ENCODE measurements at regions of chr9 and their contacts with region 1.

Region 1: GRCh38 chr9:68999393-69000105 is 14.4 kb downstream of the PRKACG start:
- DNase-seq: peak; percentile 73
- H3K4me3 Mint-ChIP-seq: no peak overlapping the region
- H3K27ac Mint-ChIP-seq: no peak overlapping the region
- H3K4me1 Mint-ChIP-seq: peaks cover 9% of the 10 kb centered on the region
- H3K27me3 Mint-ChIP-seq: peaks cover 3% of the 10 kb centered on the region

Region 2: DNA sequence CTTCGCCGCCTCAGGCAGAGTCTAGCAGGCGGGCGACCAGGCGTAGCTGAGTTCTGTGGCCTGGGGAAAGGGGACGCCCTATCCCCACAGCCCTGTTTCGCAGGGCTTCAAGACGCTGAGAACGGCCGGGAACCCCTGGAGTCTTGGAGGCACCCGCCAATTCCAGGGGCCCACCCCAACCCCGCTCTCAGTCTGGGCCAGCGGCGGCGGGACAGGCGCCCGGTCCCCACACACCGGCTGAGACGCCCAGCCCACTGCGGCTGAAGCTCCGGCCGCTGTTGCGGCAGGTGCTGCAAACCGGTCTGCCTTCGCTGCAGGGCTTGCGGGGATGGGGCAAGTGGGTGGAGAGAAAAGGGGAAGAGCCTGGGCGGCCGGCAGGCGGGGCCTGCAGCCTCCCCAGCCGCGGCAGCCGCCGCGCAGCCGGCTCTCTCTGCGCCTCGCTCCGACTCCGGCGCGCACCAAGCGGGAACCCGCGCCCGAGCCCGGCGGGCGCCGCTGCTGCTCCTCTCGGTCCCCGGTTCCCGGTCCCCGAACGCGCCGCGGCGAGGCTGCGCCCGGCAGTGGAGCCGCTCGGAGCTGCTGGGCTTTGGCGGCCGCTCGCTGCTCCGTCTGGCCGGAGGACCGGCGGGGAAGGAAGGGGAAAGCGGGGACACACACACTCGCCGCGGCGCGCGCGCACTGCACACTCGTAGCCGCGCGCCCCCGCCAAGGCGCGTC is 294.6 kb before region 1 on chr9 and contains the start of gene PIP5K1B:
- CTCF ChIA-PET with region 1: interaction called, 6 read pairs
- POLR2A ChIA-PET with region 1: no interaction called
- intact Hi-C with region 1: loop called (anchors 10 kb)
- DNase-seq: peak; percentile 64
- H3K4me3 Mint-ChIP-seq: peak within 1 kb of the TSS; percentile 77
- H3K27ac Mint-ChIP-seq: no peak within 1 kb of the TSS
- H3K4me1 Mint-ChIP-seq: peaks cover 19% of the 10 kb centered on the region
- H3K27me3 Mint-ChIP-seq: peaks cover 65% of the 10 kb centered on the region
- total RNA-seq, gene PIP5K1B: 1.1 to 1.6 TPM

Region 3: GRCh38 chr9:68802525-68803015 is 197.0 kb before region 1 on chr9:
- CTCF ChIA-PET with region 1: interaction called, 4 read pairs
- POLR2A ChIA-PET with region 1: no interaction called
- intact Hi-C with region 1: loop called (anchors 5 kb)
- DNase-seq: peak; percentile 71
- H3K4me3 Mint-ChIP-seq: no peak overlapping the region
- H3K27ac Mint-ChIP-seq: no peak overlapping the region
- H3K4me1 Mint-ChIP-seq: no peaks in the 10 kb centered on the region
- H3K27me3 Mint-ChIP-seq: peaks cover 2% of the 10 kb centered on the region

Region 4: DNA sequence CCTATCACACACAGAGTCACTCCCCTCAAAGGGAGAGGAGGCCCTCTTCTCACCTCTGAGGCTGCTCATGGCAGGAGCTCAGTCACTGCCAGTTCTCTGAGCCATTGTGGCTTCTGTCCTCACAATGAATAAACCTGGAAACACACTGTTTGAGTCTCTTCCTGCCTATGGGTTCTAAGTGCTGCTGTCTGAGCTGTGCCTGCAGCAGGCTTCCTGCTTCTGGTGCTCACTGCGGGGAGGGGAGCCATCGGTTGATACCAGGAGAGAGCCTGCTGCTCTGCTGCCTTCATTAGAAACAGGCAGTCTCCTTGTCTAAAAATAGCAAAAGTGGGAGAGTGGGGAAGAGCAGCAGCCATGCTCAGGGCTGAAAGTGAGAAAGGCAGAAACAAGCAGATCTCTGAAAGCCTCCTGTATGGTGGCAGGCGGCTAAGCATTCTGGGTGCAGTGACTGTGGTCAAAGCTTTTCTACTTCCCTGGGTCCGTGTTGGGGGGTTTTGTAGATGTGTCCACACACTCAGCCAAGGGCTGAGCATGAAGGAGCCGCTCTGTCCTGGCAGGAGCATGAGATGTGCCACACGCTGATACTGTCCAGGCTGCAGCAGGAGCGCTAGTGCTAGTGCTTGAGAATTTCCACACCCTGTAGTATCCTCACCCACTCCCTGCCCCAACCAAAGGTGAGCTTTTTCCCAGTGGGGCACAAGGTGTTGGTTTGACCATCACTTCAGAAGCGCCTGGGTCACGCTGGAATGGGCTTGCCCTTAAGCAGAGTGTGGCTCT is 19.8 kb before region 1 on chr9:
- CTCF ChIA-PET with region 1: interaction called, 14 read pairs
- POLR2A ChIA-PET with region 1: no interaction called
- intact Hi-C with region 1: loop called (anchors 1 kb)
- DNase-seq: peak; percentile 67
- H3K4me3 Mint-ChIP-seq: no peak overlapping the region
- H3K27ac Mint-ChIP-seq: peak overlapping the region; percentile 62
- H3K4me1 Mint-ChIP-seq: peaks cover 33% of the 10 kb centered on the region
- H3K27me3 Mint-ChIP-seq: peaks cover 3% of the 10 kb centered on the region

Measured in activated CD4-positive, alpha-beta memory T cell treated with anti-CD3 and anti-CD28 coated beads for 36 hours (primary cell).